IMR-90 (cell line): ENCODE measurements at regions of chr4 and their contacts with region 1.

Region 1: GRCh38 chr4:53786632-53787031 is 195.3 kb upstream of the LNX1 start:
- DNase-seq: peak; percentile 93
- ATAC-seq: peak; percentile 77
- H3K4me3 ChIP-seq: no peak overlapping the region
- H3K27ac ChIP-seq: peak overlapping the region; percentile 93
- H3K4me1 ChIP-seq: peaks cover 39% of the 10 kb centered on the region
- H3K27me3 ChIP-seq: no peaks in the 10 kb centered on the region
- CTCF ChIP-seq: no peak
- POLR2A ChIP-seq: no peak
- RAD21 ChIP-seq: no peak

Region 2: GRCh38 chr4:53490965-53491622 is 295.5 kb before region 1 on chr4:
- CTCF ChIA-PET with region 1: no interaction called
- POLR2A ChIA-PET with region 1: no interaction called
- dilution Hi-C with region 1: no loop called
- in situ Hi-C with region 1: no loop called
- intact Hi-C with region 1: loop called (anchors 10 kb)
- DNase-seq: peak; percentile 93
- ATAC-seq: peak; percentile 80
- H3K4me3 ChIP-seq: no peak overlapping the region
- H3K27ac ChIP-seq: peak overlapping the region; percentile 93; the same call in 1 of the 2 replicates
- H3K4me1 ChIP-seq: peaks cover 11% of the 10 kb centered on the region
- H3K27me3 ChIP-seq: no peaks in the 10 kb centered on the region
- CTCF ChIP-seq: peak; percentile 71
- POLR2A ChIP-seq: no peak
- RAD21 ChIP-seq: peak; percentile 70

Region 3: GRCh38 chr4:53586121-53586816 is 200.4 kb before region 1 on chr4:
- CTCF ChIA-PET with region 1: no interaction called
- POLR2A ChIA-PET with region 1: no interaction called
- dilution Hi-C with region 1: no loop called
- in situ Hi-C with region 1: no loop called
- intact Hi-C with region 1: loop called (anchors 10 kb)
- DNase-seq: peak; percentile 99
- ATAC-seq: peak; percentile 87
- H3K4me3 ChIP-seq: no peak overlapping the region
- H3K27ac ChIP-seq: peak overlapping the region; percentile 50; the same call in 1 of the 2 replicates
- H3K4me1 ChIP-seq: peaks cover 16% of the 10 kb centered on the region
- H3K27me3 ChIP-seq: no peaks in the 10 kb centered on the region
- CTCF ChIP-seq: no peak
- POLR2A ChIP-seq: no peak
- RAD21 ChIP-seq: 0 out of 2 replicates have a peak, but pooled peaks have one; percentile 6

Region 4: DNA sequence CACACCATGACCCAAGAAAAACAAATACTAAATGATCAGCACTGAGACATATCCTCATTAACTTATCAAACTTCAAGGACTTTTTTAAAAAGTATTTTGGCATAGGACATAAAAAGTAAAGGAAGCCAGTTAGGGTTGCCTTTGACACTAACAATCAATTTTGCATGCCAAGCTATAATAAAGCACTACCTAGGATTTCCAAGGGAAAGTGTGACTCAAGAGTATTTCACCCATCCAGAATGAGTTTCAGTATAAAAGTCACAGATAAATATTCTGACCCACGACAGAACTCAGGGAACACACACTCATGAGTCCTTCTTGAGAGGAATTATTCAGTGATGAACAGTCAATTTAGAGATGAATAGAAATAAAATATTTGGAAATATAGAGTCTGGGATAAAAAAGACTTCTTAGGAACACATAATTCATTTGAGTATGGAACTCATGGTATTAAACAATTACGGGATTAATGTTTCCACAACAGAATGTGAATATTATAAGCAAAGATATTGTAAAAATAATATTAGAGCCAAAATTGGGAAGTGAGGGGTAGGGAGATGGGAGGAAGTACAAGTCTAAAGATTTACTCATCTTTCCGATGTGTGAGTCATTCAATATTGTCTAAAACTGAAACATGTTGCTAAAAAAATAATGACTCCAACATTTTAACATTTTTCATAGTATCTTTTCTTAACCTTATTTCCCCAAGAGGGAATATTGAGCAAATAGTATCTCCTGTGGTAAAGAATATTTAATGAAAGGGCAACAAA is 51.9 kb before region 1 on chr4:
- CTCF ChIA-PET with region 1: no interaction called
- POLR2A ChIA-PET with region 1: no interaction called
- dilution Hi-C with region 1: no loop called
- in situ Hi-C with region 1: no loop called
- intact Hi-C with region 1: no loop called
- DNase-seq: peak; percentile 75
- ATAC-seq: peak; percentile 77
- H3K4me3 ChIP-seq: no peak overlapping the region
- H3K27ac ChIP-seq: no peak overlapping the region
- H3K4me1 ChIP-seq: peaks cover 7% of the 10 kb centered on the region
- H3K27me3 ChIP-seq: no peaks in the 10 kb centered on the region
- CTCF ChIP-seq: no peak
- POLR2A ChIP-seq: no peak
- RAD21 ChIP-seq: no peak

Region 5: DNA sequence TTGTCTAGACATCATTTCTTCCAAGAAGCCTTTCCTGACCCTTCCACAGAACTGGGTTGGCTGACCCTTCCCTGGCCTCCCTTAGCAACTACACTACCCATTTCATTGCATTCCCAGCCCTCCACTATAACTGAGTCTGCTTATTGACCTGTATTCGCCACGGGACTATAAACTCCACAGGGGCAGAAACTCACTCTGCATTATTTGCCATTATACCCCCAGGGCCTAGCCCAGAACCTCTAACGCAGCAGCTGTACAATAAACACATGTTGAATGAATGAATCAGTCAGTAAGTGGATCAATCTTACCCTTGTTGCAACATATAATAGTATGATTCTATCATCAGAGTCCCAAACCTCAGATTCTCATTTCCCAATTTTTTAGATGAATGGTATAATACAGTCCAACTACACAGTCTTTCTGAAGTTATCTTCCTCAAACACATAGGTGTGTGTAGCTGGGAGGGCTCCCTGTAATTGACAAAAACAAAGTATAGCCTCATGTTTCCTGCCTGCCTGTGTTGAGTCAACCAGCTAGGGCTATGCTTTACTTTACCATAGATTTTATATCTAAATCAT is 68.4 kb after region 1 on chr4:
- CTCF ChIA-PET with region 1: no interaction called
- POLR2A ChIA-PET with region 1: interaction called, 3 read pairs
- dilution Hi-C with region 1: no loop called
- in situ Hi-C with region 1: no loop called
- intact Hi-C with region 1: loop called (anchors 5 kb)
- DNase-seq: peak; percentile 60
- ATAC-seq: peak; percentile 12
- H3K4me3 ChIP-seq: no peak overlapping the region
- H3K27ac ChIP-seq: peak overlapping the region; percentile 72
- H3K4me1 ChIP-seq: peaks cover 27% of the 10 kb centered on the region
- H3K27me3 ChIP-seq: no peaks in the 10 kb centered on the region
- CTCF ChIP-seq: no peak
- POLR2A ChIP-seq: no peak
- RAD21 ChIP-seq: no peak